K562 (cell line): ENCODE measurements at regions of chr17 and their contacts with region 1.

Region 1: GRCh38 chr17:78168242-78168902 is at the start of gene SYNGR2:
- DNase-seq: peak; percentile 94 to 95 (median 94)
- ATAC-seq: peak; percentile 86
- H3K4me3 ChIP-seq: peak within 1 kb of the TSS; percentile 92
- H3K27ac ChIP-seq: peak within 1 kb of the TSS; percentile 83
- H3K4me1 ChIP-seq: peaks cover 16 to 65% of the 10 kb centered on the region in 2 experiments; a peak in 4 of 5 replicates
- H3K27me3 ChIP-seq: no peaks in the 10 kb centered on the region
- CTCF ChIP-seq: no peak; a peak in 1 of 6 replicates
- EP300 ChIP-seq: no peak
- POLR2A ChIP-seq: no peak; the same call in 1 of the 2 replicates
- RAD21 ChIP-seq: no peak; a peak in 2 of 4 replicates
- polyA plus RNA-seq, gene SYNGR2: 1.4 to 7.6 TPM

Region 2: GRCh38 chr17:78128551-78129350 is 39.6 kb before region 1 on chr17 and contains the start of gene TMC6:
- CTCF ChIA-PET with region 1: no interaction called
- POLR2A ChIA-PET with region 1: interaction called, 3 read pairs
- in situ Hi-C with region 1: no loop called
- intact Hi-C with region 1: loop called (anchors 5 kb)
- DNase-seq: peak; percentile 93 to 99 (median 96)
- ATAC-seq: peak; percentile 75
- H3K4me3 ChIP-seq: peak within 1 kb of the TSS; percentile 98
- H3K27ac ChIP-seq: peak within 1 kb of the TSS; percentile 81
- H3K4me1 ChIP-seq: peaks cover 32 to 92% of the 10 kb centered on the region in 2 experiments
- H3K27me3 ChIP-seq: no peaks in the 10 kb centered on the region
- CTCF ChIP-seq: no peak
- EP300 ChIP-seq: peak; percentile 92
- POLR2A ChIP-seq: peak; percentile 81
- RAD21 ChIP-seq: no peak
- polyA plus RNA-seq, gene TMC6: 4.1 to 8.2 TPM

Region 3: GRCh38 chr17:78146881-78147280 is 21.5 kb before region 1 on chr17:
- CTCF ChIA-PET with region 1: no interaction called
- POLR2A ChIA-PET with region 1: interaction called, 3 read pairs
- in situ Hi-C with region 1: no loop called
- intact Hi-C with region 1: loop called (anchors 1 kb)
- DNase-seq: no peak
- ATAC-seq: no peak
- H3K4me3 ChIP-seq: peak overlapping the region; percentile 38
- H3K27ac ChIP-seq: peak overlapping the region; percentile 85
- H3K4me1 ChIP-seq: peaks cover 51 to 93% of the 10 kb centered on the region in 2 experiments
- H3K27me3 ChIP-seq: no peaks in the 10 kb centered on the region
- CTCF ChIP-seq: no peak
- EP300 ChIP-seq: no peak
- POLR2A ChIP-seq: no peak
- RAD21 ChIP-seq: no peak